ENCODE measurements at regions of chr6 and their contacts with region 1.

Region 1: GRCh38 chr6:96164802-96165201 is 149.0 kb downstream of the FUT9 start:
- DNase-seq: no peak
- ATAC-seq: no peak
- H3K4me3 ChIP-seq: no peak overlapping the region
- H3K4me3 Mint-ChIP-seq: no peak overlapping the region
- H3K27ac ChIP-seq: no peak overlapping the region
- H3K27ac Mint-ChIP-seq: no peak overlapping the region
- H3K4me1 ChIP-seq: no peaks in the 10 kb centered on the region
- H3K4me1 Mint-ChIP-seq: no peaks in the 10 kb centered on the region
- H3K27me3 ChIP-seq: no peaks in the 10 kb centered on the region
- H3K27me3 Mint-ChIP-seq: no peaks in the 10 kb centered on the region
- CTCF ChIP-seq: no peak

Region 2: DNA sequence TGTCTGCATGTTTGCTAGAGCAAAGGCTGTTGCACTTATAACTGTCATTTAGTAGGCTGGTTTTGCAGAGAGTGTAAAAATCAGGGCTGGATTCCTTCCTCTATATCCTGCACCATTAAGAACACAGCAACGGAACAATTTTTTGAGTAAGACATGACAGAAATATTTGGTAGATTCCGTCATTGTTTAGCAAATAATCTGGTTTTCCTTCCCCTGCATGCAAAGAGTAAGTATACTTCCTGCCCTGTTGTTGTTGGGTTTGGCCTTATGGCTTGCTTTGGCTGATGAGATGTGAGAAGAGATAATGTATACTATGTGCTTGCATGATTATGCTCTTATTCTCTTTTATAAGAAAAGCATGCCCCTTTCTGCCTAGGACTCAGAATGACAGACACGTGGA is 563.7 kb before region 1 on chr6:
- CTCF ChIA-PET with region 1: no interaction called
- POLR2A ChIA-PET with region 1: no interaction called
- intact Hi-C with region 1: loop called in 1 of 2 experiments (anchors 5 kb)
- DNase-seq: no peak
- ATAC-seq: no peak
- H3K4me3 ChIP-seq: no peak overlapping the region
- H3K4me3 Mint-ChIP-seq: no peak overlapping the region
- H3K27ac ChIP-seq: no peak overlapping the region
- H3K27ac Mint-ChIP-seq: no peak overlapping the region
- H3K4me1 ChIP-seq: no peaks in the 10 kb centered on the region
- H3K4me1 Mint-ChIP-seq: peaks cover 2% of the 10 kb centered on the region
- H3K27me3 ChIP-seq: no peaks in the 10 kb centered on the region
- H3K27me3 Mint-ChIP-seq: no peaks in the 10 kb centered on the region
- CTCF ChIP-seq: no peak

Region 3: GRCh38 chr6:96153775-96154174 is 11.0 kb before region 1 on chr6:
- CTCF ChIA-PET with region 1: no interaction called
- POLR2A ChIA-PET with region 1: no interaction called
- intact Hi-C with region 1: no loop called
- DNase-seq: no peak
- ATAC-seq: no peak
- H3K4me3 ChIP-seq: no peak overlapping the region
- H3K4me3 Mint-ChIP-seq: no peak overlapping the region
- H3K27ac ChIP-seq: no peak overlapping the region
- H3K27ac Mint-ChIP-seq: no peak overlapping the region
- H3K4me1 ChIP-seq: no peaks in the 10 kb centered on the region
- H3K4me1 Mint-ChIP-seq: peaks cover 5% of the 10 kb centered on the region
- H3K27me3 ChIP-seq: no peaks in the 10 kb centered on the region
- H3K27me3 Mint-ChIP-seq: no peaks in the 10 kb centered on the region
- CTCF ChIP-seq: no peak